ENCODE measurements at regions of chr21 and their contacts with region 1.

Region 1: DNA sequence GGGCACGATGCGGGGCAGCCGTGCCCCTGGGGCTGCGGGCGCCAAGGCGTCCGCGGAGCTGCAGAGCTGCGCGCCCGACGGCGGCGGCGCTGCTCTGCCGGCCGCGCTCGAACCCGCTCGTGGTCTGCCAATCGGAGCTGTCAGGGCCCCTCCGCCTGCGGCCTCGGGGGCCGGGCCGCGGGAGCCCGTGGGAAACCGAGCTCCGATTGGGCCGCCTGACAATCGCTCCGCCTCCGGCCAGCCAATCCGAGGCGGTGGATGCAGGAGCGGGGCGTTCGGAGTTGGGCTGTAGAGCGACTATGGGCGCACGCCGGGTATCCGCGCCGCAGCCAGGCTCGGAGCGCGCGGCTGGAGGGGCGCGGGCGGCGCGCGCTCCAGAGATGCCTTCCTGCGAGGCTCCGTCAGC is 100.5 kb upstream of the SOD1 start:
- DNase-seq: peak; percentile 85 to 93
- H3K4me3 ChIP-seq: peak overlapping the region; percentile 80; the same call in 1 of the 2 replicates
- H3K27ac ChIP-seq: peak overlapping the region; percentile 91; the same call in 1 of the 2 replicates
- H3K4me1 ChIP-seq: peaks cover 9% of the 10 kb centered on the region
- H3K27me3 ChIP-seq: no peaks in the 10 kb centered on the region
- CTCF ChIP-seq: no peak; the same call in 1 of the 2 replicates

Region 2: DNA sequence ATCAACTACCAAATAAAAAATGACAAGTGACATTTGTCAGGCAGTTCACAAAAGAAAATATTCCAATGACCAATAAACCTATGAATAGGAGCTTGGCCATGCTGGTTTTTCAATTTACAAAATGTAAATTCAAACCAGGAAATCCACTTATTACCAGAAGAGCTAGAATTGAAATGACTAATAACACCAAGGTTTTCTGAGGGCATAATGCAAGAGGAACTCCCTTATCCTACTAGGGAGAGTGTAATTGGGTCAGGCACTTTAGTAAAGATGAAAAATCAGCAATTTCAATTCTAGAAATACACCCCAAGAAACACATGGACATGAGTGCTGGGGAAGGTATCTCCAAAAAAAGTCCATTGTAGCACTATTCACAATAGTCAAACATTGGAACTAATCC is 198.2 kb before region 1 on chr21:
- CTCF ChIA-PET with region 1: no interaction called
- POLR2A ChIA-PET with region 1: no interaction called
- intact Hi-C with region 1: no loop called
- DNase-seq: no peak
- H3K4me3 ChIP-seq: no peak overlapping the region
- H3K27ac ChIP-seq: no peak overlapping the region
- H3K4me1 ChIP-seq: peaks cover 37% of the 10 kb centered on the region
- H3K27me3 ChIP-seq: no peaks in the 10 kb centered on the region
- CTCF ChIP-seq: no peak

Region 3: DNA sequence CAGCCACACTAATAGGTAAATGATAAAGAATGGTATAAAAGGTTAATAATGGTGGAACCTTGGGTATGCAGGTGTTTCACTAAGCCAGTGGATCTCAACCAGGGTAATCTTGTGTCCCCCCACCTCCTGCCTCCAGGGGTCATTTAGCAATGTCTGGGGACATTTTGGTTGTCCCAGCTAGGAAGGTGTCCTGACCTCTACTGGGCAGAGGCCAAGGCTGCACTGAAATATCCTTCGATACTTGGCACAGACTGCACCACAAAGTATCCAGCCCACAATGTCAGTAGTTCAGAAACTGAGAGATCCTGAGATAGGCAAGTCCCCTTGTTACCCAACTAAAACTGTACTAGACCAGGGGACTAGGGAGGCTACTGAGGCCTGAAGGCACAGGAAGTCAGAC is 101.3 kb before region 1 on chr21:
- CTCF ChIA-PET with region 1: interaction called, 23 read pairs
- POLR2A ChIA-PET with region 1: no interaction called
- intact Hi-C with region 1: no loop called
- DNase-seq: no peak
- H3K4me3 ChIP-seq: no peak overlapping the region
- H3K27ac ChIP-seq: no peak overlapping the region
- H3K4me1 ChIP-seq: no peaks in the 10 kb centered on the region
- H3K27me3 ChIP-seq: no peaks in the 10 kb centered on the region
- CTCF ChIP-seq: peak; percentile 14; the same call in 1 of the 2 replicates

Region 4: DNA sequence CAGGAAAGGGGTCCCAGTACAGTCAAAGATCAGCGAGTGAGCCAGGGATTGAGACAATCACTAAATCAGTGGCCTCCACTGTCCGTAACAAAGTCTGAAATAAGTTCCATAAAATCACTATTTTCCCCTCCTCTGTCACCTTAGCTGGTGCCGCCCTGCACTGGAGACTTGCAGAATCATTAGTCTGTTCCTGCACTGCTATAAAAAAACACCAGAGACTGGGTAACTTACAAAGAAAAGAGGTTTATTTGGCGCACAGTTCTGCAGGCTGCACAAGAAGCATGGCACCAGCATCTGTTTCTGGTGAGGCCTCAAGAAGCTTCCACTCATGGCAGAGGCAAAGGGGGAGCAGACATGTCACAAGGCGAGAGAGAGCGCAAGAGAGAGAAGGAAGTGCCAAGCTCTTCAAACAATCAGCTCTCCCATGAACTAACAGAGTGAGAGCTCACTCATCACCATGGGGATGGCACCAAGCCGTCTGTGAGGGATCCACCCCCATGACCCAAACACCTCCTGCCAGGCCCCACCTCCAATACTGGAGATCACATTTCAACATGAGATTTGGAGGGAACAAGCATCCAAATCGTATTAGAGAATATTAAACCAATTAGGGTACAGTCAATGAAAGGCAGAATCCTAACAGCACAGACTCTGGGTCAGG is 85.2 kb before region 1 on chr21:
- CTCF ChIA-PET with region 1: interaction called, 23 read pairs
- POLR2A ChIA-PET with region 1: no interaction called
- intact Hi-C with region 1: no loop called
- DNase-seq: no peak
- H3K4me3 ChIP-seq: no peak overlapping the region
- H3K27ac ChIP-seq: no peak overlapping the region
- H3K4me1 ChIP-seq: no peaks in the 10 kb centered on the region
- H3K27me3 ChIP-seq: no peaks in the 10 kb centered on the region
- CTCF ChIP-seq: no peak

Region 5: DNA sequence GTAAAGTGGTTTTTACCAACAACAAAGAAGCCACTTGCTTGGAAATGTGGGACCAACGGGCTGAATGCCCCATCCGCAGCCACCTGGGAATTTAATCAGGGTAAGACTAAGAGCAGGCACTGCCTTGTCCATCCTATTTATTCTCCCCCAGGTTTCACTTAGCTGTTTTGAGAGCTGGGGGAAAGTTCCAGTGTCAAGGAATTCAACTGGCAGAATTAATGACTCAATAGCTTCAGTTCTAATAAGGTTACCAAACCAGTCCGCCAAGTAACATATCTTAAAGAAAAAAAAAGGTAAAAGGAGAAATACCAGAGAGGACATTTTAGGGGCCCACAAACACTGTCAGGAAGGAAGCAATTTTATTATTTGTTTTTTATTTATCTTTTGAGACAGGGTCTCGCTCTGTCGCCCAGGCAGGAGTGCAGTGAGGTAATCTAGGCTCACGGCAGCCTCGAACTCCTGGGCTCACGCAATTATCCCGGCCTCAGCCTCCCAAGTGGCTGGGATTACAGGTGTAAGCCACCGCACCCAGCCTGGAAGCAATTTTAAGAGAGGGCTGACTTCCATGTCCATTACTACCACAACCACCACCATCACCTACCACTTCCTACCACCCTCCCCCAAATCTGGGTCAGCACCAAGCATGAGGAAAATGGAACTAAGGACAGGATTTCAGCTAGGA is 56.9 kb before region 1 on chr21:
- CTCF ChIA-PET with region 1: interaction called, 3 read pairs
- POLR2A ChIA-PET with region 1: no interaction called
- intact Hi-C with region 1: loop called (anchors 2 kb)
- DNase-seq: peak; percentile 33 to 89
- H3K4me3 ChIP-seq: peak overlapping the region; percentile 50; the same call in 1 of the 2 replicates
- H3K27ac ChIP-seq: peak overlapping the region; percentile 100
- H3K4me1 ChIP-seq: peaks cover 31% of the 10 kb centered on the region
- H3K27me3 ChIP-seq: no peaks in the 10 kb centered on the region
- CTCF ChIP-seq: no peak

Region 6: GRCh38 chr21:31548688-31549087 is 10.3 kb before region 1 on chr21:
- CTCF ChIA-PET with region 1: no interaction called
- POLR2A ChIA-PET with region 1: interaction called, 33 read pairs
- intact Hi-C with region 1: no loop called
- DNase-seq: no peak
- H3K4me3 ChIP-seq: no peak overlapping the region
- H3K27ac ChIP-seq: no peak overlapping the region
- H3K4me1 ChIP-seq: 0 out of 2 replicates have a peak, but pooled peaks cover under 1% of the 10 kb centered on the region
- H3K27me3 ChIP-seq: no peaks in the 10 kb centered on the region
- CTCF ChIP-seq: no peak

Region 7: GRCh38 chr21:31580866-31581276 is 21.9 kb after region 1 on chr21:
- CTCF ChIA-PET with region 1: no interaction called
- POLR2A ChIA-PET with region 1: no interaction called
- intact Hi-C with region 1: no loop called
- DNase-seq: peak; percentile 44 to 56
- H3K4me3 ChIP-seq: no peak overlapping the region
- H3K27ac ChIP-seq: no peak overlapping the region
- H3K4me1 ChIP-seq: no peaks in the 10 kb centered on the region
- H3K27me3 ChIP-seq: no peaks in the 10 kb centered on the region
- CTCF ChIP-seq: peak; percentile 85